ENCODE measurements at regions of chr16 and their contacts with region 1.

Region 1: GRCh38 chr16:58336332-58337089 is 41.7 kb upstream of the PRSS54 start:
- DNase-seq: peak; percentile 62 to 89
- ATAC-seq: peak; percentile 95

Region 2: DNA sequence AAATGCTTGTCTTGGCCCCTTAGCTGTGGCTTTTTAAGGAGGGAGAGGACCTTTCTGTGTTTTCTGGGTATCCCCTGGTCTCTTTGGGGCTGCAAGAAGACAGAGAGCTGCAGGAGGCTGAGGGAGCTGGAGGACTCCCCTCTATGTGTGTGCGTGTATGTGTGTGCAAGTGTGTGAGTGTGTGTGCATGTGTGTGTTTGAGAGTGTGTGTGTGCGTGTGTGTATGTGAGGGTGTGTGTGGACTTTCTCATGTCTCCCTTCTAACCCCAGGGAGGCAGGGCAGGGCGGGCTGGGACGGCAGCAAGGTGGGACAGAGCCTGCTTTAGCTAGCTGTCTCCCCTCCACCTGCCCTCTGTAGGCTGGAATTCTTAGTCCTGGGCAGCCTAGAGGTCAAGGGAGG is 43.6 kb before region 1 on chr16:
- intact Hi-C with region 1: no loop called
- DNase-seq: no peak
- ATAC-seq: no peak

Region 3: GRCh38 chr16:58392215-58393137 is 56.0 kb after region 1 on chr16 and contains the start of gene GINS3:
- intact Hi-C with region 1: no loop called
- DNase-seq: peak; percentile 91 to 92
- ATAC-seq: peak; percentile 98
- total RNA-seq, gene GINS3: 2.8 to 3.3 TPM

Region 4: GRCh38 chr16:58487566-58488351 is 151.2 kb after region 1 on chr16:
- intact Hi-C with region 1: loop called (anchors 2 to 10 kb)
- DNase-seq: peak; percentile 58 to 85
- ATAC-seq: peak; percentile 95

Region 5: GRCh38 chr16:58494981-58495520 is 158.5 kb after region 1 on chr16:
- intact Hi-C with region 1: loop called in 1 of 2 experiments (anchors 10 kb)
- DNase-seq: peak; percentile 59 to 60
- ATAC-seq: peak; percentile 35

Region 6: DNA sequence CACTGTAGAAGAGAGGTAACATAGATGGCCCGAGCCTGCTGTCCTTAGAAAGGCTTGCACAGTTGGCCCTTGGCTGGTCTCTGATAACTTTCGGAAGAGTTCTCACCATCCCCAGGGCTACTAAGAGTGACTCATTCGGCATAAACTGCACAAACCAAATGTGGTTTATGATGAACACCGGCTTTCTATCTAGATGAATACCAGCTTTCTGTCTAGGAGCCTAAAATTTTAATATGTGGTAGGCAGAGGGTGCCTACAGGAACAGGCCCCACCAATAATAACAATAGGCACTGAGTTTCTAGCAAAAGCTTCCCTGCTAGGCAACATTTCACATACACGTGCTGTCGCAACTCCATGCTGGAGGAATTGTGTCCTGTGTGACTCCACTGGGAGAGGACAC is 277.7 kb after region 1 on chr16:
- intact Hi-C with region 1: no loop called
- DNase-seq: no peak
- ATAC-seq: no peak

Measured in left colon (tissue), 2 donors.